ENCODE measurements at regions of chr7 and their contacts with region 1.

Region 1: DNA sequence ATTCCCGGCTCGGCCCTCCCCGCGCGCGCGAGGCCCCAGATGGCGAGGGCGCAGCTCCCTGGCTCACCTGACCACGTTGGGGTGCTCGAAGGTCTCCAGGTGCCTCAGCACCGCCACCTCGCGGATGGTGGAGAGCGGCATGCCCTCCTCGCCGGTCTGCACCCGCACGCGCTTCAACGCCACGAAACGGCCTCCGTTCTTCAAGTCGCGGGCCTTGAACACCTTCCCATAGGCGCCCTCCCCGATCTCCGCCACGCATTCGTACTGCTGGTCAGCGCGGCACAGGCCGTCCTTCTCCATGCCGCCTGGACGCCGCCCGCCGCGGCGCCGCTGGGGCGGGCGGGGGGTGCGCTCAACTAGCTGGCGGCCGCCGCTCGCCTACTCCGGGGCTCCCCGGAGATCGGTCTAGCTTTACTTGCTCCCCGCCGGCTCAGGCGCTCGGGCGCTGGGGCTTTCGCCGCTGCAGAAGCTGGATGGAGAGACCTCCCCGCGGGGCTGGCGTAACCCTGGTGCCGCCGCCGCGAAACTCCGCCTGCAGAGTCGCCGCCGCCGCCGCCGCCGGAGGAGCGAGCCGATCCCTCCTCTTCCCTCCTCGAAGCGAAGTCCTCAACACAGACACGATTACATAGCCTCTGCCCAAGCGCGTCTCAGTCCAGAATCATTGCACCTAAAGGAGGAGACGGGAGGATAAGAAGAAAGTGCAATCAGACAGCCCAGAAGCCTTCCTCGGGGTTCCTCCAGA is 3.2 kb downstream of the CDK6 start:
- DNase-seq: no peak
- H3K4me3 ChIP-seq: peak overlapping the region; percentile 85
- CTCF ChIP-seq: peak; percentile 90

Region 2: GRCh38 chr7:92695308-92696261 is 137.6 kb before region 1 on chr7:
- CTCF ChIA-PET with region 1: interaction called, 12 read pairs
- POLR2A ChIA-PET with region 1: interaction called, 6 read pairs
- DNase-seq: peak; percentile 86
- H3K4me3 ChIP-seq: peak overlapping the region; percentile 59
- CTCF ChIP-seq: no peak

Region 3: DNA sequence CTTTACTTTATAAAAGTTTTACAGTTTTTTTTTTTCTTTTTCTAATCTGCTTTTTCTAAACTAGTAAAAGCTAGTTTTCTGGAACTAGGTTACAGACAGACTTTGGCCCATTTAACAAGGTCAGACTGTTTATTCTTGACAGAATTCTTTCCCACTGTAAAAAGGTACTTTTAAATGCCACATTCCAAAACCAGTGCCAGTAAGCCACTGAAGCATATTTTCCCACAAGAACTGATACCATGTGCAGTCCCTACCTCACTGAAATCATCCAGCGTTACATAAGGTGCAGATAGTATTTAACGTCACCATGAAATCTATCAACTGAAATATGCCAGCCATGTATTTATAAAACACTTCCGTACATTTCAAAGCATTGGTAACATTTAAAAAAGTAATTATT is 118.4 kb before region 1 on chr7:
- CTCF ChIA-PET with region 1: no interaction called
- POLR2A ChIA-PET with region 1: no interaction called
- DNase-seq: no peak
- H3K4me3 ChIP-seq: no peak overlapping the region
- CTCF ChIP-seq: no peak